ENCODE measurements at regions of chr1 and their contacts with region 1.

Region 1: GRCh38 chr1:192580351-192580962 is 4.9 kb downstream of the RGS1 start:
- DNase-seq: peak; percentile 42
- H3K4me3 Mint-ChIP-seq: no peak overlapping the region
- H3K27ac Mint-ChIP-seq: no peak overlapping the region
- H3K4me1 Mint-ChIP-seq: peaks cover 27% of the 10 kb centered on the region
- H3K27me3 Mint-ChIP-seq: no peaks in the 10 kb centered on the region

Region 2: DNA sequence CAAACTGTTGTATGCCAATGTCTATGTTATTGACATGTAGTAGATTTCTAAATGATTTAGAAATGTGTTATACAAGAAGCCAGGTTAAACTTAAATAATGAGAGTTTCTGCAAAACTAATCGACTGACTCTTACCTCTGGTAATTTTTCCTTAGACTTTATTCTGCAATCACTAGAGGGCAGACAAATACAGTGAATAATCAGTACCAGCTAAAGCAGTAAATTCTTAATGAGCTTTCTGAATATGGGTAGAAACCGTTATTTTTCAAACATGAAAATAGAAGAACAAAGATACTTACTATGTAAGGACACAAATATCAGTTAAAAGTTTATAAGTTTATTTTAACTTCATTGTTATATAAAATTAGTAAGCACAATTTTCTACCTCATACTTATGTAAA is 102.8 kb before region 1 on chr1:
- CTCF ChIA-PET with region 1: interaction called, 88 read pairs
- intact Hi-C with region 1: loop called (anchors 1 kb)
- DNase-seq: no peak
- H3K4me3 Mint-ChIP-seq: no peak overlapping the region
- H3K27ac Mint-ChIP-seq: no peak overlapping the region
- H3K4me1 Mint-ChIP-seq: no peaks in the 10 kb centered on the region
- H3K27me3 Mint-ChIP-seq: no peaks in the 10 kb centered on the region

Region 3: GRCh38 chr1:192530254-192530653 is 50.2 kb before region 1 on chr1:
- CTCF ChIA-PET with region 1: no interaction called
- intact Hi-C with region 1: loop called (anchors 1 kb)
- DNase-seq: no peak
- H3K4me3 Mint-ChIP-seq: no peak overlapping the region
- H3K27ac Mint-ChIP-seq: no peak overlapping the region
- H3K4me1 Mint-ChIP-seq: peaks cover 20% of the 10 kb centered on the region
- H3K27me3 Mint-ChIP-seq: no peaks in the 10 kb centered on the region

Region 4: GRCh38 chr1:192550922-192551534 is 29.4 kb before region 1 on chr1:
- CTCF ChIA-PET with region 1: interaction called, 3 read pairs
- intact Hi-C with region 1: loop called (anchors 1 kb)
- DNase-seq: peak; percentile 34
- H3K4me3 Mint-ChIP-seq: no peak overlapping the region
- H3K27ac Mint-ChIP-seq: peak overlapping the region; percentile 53
- H3K4me1 Mint-ChIP-seq: peaks cover 29% of the 10 kb centered on the region
- H3K27me3 Mint-ChIP-seq: no peaks in the 10 kb centered on the region

Region 5: GRCh38 chr1:192601567-192601966 is 21.1 kb after region 1 on chr1:
- CTCF ChIA-PET with region 1: interaction called, 4 read pairs
- intact Hi-C with region 1: loop called (anchors 1 kb)
- DNase-seq: no peak
- H3K4me3 Mint-ChIP-seq: no peak overlapping the region
- H3K27ac Mint-ChIP-seq: no peak overlapping the region
- H3K4me1 Mint-ChIP-seq: peaks cover 26% of the 10 kb centered on the region
- H3K27me3 Mint-ChIP-seq: no peaks in the 10 kb centered on the region

Region 6: DNA sequence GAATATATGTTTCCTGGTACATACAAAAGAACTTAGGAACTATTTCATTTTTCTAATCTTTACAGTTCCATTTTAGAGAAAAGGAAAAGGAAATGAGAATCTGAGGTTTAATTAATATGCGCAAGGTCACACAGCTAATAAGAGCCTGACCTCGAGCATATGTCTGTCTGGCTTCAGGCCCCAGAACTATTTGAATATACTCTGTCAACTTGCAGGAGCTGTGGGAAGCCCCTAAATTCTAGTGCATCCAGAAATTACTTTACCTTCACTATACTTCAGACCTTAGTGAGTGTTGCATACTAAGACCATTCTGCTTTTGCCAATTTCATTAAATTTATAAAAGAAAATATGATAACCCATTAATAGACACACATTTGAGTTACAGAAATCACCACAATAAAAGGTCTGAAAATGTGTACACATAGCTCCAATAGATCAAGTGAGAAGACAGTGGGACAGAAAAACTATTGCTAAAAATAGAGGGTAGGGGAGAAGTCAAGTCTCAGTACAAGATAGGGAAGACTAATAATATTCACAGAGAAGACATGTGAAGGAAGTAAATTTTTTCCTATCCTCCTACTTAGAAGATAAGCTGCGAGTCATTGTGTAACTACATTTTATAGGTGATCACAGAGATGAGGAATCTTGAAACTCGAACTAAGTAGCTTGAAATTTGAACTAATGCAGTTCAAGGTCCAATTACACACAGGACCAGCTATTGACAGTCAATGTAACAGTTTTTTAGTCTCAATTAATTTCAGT is 59.3 kb after region 1 on chr1:
- CTCF ChIA-PET with region 1: no interaction called
- intact Hi-C with region 1: loop called (anchors 1 kb)
- DNase-seq: peak; percentile 12
- H3K4me3 Mint-ChIP-seq: no peak overlapping the region
- H3K27ac Mint-ChIP-seq: no peak overlapping the region
- H3K4me1 Mint-ChIP-seq: peaks cover 18% of the 10 kb centered on the region
- H3K27me3 Mint-ChIP-seq: peaks cover 7% of the 10 kb centered on the region

Region 7: DNA sequence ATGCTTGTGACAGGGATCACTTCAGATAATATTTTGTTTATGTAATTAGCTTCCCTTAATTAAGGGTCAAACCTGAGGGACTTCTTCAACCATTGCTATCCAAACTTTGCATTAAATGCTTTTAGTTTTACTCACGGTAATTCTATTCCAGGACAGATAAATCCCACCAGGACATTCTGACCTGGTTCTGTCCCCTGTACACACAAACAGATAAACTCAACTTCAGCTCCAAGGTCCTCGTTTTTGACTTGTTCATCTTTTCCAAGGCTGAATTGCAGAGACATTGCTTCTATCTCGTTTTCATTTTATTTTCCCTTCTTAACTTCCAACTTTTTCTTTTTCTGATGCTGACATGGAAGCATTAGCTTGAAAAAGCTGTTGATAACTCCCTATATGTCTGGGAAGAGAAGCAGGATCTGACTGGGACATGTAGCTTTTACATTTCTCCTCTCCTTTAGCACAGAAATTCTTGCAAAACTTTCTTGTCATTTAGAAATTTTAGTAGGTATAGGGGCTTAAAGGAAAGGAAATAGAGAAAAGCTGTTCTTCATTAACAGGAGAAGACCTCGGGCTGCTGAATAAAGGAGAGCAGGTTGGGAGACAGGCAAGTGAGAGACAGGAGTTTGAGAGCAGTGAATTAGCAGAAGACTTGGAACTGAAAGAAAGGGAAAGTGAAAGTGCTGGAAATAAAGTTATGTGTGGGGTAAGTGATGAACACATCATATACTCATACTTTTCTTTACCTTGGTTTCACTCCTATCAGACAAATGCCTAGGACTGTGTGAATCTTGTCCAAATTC is 837.7 kb after region 1 on chr1:
- CTCF ChIA-PET with region 1: no interaction called
- intact Hi-C with region 1: no loop called
- DNase-seq: no peak
- H3K4me3 Mint-ChIP-seq: peak overlapping the region; percentile 52
- H3K27ac Mint-ChIP-seq: peak overlapping the region; percentile 39
- H3K4me1 Mint-ChIP-seq: peaks cover 46% of the 10 kb centered on the region
- H3K27me3 Mint-ChIP-seq: no peaks in the 10 kb centered on the region

Measured in activated naive CD4-positive, alpha-beta T cell treated with anti-CD3 and anti-CD28 coated beads for 36 hours (primary cell).